Endothelial cell of umbilical vein (primary cell): ENCODE measurements at regions of chr5 and their contacts with region 1.

Region 1: DNA sequence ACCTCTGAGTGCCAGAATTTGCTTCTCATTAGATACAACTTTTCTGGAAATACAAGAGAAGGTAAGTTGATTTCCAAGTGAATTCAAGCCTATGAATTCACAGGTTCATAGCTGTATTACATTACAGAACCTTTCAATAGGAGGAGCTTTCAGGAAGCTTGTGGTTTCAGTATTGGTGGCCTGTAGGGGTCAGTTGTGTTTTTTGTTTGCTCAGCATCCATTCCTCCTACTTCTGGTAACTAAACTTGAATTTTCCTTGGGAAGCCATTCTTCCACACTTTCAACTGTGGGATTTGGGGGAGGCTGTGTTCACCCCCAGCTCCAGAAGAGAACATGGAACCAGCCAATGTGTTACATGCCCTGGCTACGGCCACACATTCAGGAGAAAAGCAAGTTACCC is 5.6 kb upstream of the CYSTM1 start:
- DNase-seq: peak; percentile 12
- H3K4me3 ChIP-seq: no peak overlapping the region
- H3K27ac ChIP-seq: no peak overlapping the region
- H3K4me1 ChIP-seq: peaks cover under 1% of the 10 kb centered on the region
- H3K27me3 ChIP-seq: peaks cover 0 to 1% of the 10 kb centered on the region in 2 experiments
- CTCF ChIP-seq: no peak
- POLR2A ChIP-seq: no peak

Region 2: GRCh38 chr5:139872052-139872766 is 297.2 kb before region 1 on chr5:
- CTCF ChIA-PET with region 1: no interaction called
- POLR2A ChIA-PET with region 1: no interaction called
- dilution Hi-C with region 1: no loop called
- intact Hi-C with region 1: no loop called
- DNase-seq: no peak
- H3K4me3 ChIP-seq: no peak overlapping the region
- H3K27ac ChIP-seq: no peak overlapping the region
- H3K4me1 ChIP-seq: no peaks in the 10 kb centered on the region
- H3K27me3 ChIP-seq: peaks cover 0 to 3% of the 10 kb centered on the region in 2 experiments
- CTCF ChIP-seq: no peak
- POLR2A ChIP-seq: no peak

Region 3: DNA sequence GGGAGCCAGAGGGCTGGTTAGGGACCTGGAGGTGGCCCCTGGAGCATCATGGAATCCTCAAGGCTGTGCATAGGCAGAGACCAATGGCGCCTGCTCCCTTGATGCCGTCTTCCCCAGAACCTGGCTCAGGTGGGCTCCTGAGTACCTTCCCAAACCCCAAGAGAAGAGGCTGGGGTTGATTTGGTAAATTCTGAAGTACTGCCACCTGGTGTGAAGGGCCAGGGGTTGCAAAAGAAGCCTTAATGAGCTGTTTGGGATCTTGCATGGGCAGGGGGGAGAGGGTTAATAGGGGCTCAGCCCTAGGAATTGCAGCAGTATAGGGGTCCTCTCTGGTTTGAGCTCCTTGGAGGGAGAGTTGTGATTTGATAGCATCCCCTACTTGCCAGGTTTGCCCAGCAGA is 57.6 kb after region 1 on chr5:
- CTCF ChIA-PET with region 1: interaction called, 17 read pairs
- POLR2A ChIA-PET with region 1: no interaction called
- dilution Hi-C with region 1: no loop called
- intact Hi-C with region 1: no loop called
- DNase-seq: no peak
- H3K4me3 ChIP-seq: no peak overlapping the region
- H3K27ac ChIP-seq: no peak overlapping the region
- H3K4me1 ChIP-seq: peaks cover 1% of the 10 kb centered on the region
- H3K27me3 ChIP-seq: no peaks in the 10 kb centered on the region
- CTCF ChIP-seq: peak in 1 of 2 donors; percentile 4
- POLR2A ChIP-seq: no peak